Panc1 (cell line): ENCODE measurements at regions of chr1 and their contacts with region 1.

Region 1: DNA sequence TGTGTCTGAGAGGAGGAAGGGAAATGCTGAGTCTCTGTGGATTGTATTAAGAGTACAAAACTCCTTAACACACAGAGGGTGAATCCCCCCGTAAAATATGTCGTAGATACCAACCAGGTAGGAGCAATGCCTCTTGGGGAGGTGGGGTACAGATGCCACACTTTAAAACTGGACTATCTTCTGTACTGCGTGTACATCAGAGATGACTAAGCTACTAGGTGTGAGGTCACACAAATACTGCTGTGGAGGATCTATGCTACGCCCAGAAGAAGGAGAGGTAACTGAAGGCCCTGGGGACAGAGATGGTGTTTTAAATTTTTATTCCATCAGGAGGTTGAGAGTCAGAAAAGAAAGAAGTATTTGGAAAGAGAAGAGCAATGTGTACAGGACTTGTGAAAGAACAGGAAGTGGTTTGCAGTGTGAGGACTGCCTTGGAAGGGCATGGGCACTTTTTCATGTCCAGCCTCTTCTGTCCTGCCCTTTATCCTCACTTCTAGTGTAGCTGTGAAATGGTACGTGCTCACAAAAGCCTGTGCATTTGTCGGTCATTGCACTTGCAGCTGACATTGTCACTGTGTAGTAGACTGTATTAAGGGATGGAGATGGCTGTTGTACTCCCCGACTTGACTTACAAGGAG is 287.8 kb upstream of the CHRM3 start:
- DNase-seq: no peak
- ATAC-seq: no peak
- H3K4me3 ChIP-seq: no peak overlapping the region
- H3K27ac ChIP-seq: no peak overlapping the region
- H3K4me1 ChIP-seq: no peaks in the 10 kb centered on the region
- H3K27me3 ChIP-seq: no peaks in the 10 kb centered on the region
- CTCF ChIP-seq: no peak

Region 2: GRCh38 chr1:238129677-238130076 is 968.8 kb before region 1 on chr1:
- CTCF ChIA-PET with region 1: no interaction called
- POLR2A ChIA-PET with region 1: no interaction called
- in situ Hi-C with region 1: no loop called
- intact Hi-C with region 1: loop called (anchors 5 kb)
- DNase-seq: no peak
- ATAC-seq: no peak
- H3K4me3 ChIP-seq: no peak overlapping the region
- H3K27ac ChIP-seq: no peak overlapping the region
- H3K4me1 ChIP-seq: no peaks in the 10 kb centered on the region
- H3K27me3 ChIP-seq: no peaks in the 10 kb centered on the region
- CTCF ChIP-seq: no peak